PC-9 (cell line): ENCODE measurements at regions of chr2 and their contacts with region 1.

Region 1: GRCh38 chr2:199488772-199489400 is 31.1 kb upstream of the SATB2 start:
- DNase-seq: peak; percentile 34 to 36
- H3K4me3 ChIP-seq: no peak overlapping the region
- H3K27ac ChIP-seq: no peak overlapping the region
- H3K4me1 ChIP-seq: no peaks in the 10 kb centered on the region
- H3K27me3 ChIP-seq: no peaks in the 10 kb centered on the region
- CTCF ChIP-seq: peak; percentile 80

Region 2: DNA sequence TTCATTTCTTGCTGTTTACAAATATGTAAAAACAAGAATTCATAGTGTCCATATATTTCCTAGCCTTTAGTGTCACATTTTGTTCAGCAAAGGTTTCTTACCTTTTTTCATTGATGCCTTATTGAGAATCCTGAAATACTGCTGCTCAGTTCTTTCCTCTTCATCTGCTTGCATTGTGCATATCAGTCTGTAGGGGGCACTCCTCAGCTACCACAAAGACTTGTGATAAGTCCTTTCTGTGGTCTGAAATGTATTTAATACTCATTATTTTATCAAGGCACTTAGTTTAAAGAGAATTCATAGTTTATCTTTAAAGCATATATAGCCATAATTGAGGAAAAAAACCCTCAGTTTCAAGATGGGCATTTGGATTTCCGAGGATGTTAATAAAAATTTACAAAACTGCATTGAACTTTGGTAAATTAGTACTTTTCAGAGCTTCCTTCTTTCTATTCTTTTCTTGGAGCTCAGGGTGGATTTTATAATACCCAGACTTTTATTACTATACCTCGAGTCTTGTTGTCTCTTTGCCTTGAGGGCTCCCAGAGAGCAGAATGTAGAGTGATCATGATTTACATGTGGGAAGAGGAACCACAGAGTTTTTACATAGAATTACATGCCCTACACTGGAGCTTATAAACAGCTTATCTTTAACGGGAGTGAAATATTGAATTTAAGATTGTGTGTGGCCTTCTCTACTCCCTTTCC is 1114.4 kb before region 1 on chr2:
- CTCF ChIA-PET with region 1: no interaction called
- POLR2A ChIA-PET with region 1: no interaction called
- intact Hi-C with region 1: loop called (anchors 5 kb)
- DNase-seq: peak in 1 of 2 experiments; percentile 5
- H3K4me3 ChIP-seq: no peak overlapping the region
- H3K27ac ChIP-seq: no peak overlapping the region
- H3K4me1 ChIP-seq: no peaks in the 10 kb centered on the region
- H3K27me3 ChIP-seq: no peaks in the 10 kb centered on the region
- CTCF ChIP-seq: peak; percentile 78

Region 3: GRCh38 chr2:198657512-198658121 is 831.3 kb before region 1 on chr2:
- CTCF ChIA-PET with region 1: interaction called, 4 read pairs
- POLR2A ChIA-PET with region 1: no interaction called
- intact Hi-C with region 1: loop called (anchors 5 kb)
- DNase-seq: no peak
- H3K4me3 ChIP-seq: no peak overlapping the region
- H3K27ac ChIP-seq: no peak overlapping the region
- H3K4me1 ChIP-seq: no peaks in the 10 kb centered on the region
- H3K27me3 ChIP-seq: no peaks in the 10 kb centered on the region
- CTCF ChIP-seq: peak; percentile 66

Region 4: DNA sequence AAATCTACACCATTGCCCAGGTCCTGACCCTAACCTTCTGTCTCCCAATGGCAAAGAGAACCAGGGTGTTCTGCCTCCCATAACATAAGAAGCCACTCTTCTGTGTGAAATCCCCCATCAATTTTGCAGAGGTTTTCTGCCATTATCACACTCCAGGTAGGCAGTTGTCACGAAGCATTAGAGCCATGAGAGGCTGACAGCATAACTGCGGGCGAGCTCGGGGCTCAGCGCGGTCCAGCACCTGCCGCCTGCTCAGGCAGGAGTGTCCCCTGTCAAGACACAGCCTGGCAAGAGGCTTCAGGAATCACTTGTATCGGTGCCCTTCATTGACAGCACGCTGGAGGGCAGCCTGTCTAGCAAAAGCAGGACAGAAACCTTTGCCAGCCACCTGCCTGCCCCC is 282.4 kb before region 1 on chr2:
- CTCF ChIA-PET with region 1: no interaction called
- POLR2A ChIA-PET with region 1: no interaction called
- intact Hi-C with region 1: no loop called
- DNase-seq: no peak
- H3K4me3 ChIP-seq: no peak overlapping the region
- H3K27ac ChIP-seq: no peak overlapping the region
- H3K4me1 ChIP-seq: no peaks in the 10 kb centered on the region
- H3K27me3 ChIP-seq: no peaks in the 10 kb centered on the region
- CTCF ChIP-seq: no peak

Region 5: DNA sequence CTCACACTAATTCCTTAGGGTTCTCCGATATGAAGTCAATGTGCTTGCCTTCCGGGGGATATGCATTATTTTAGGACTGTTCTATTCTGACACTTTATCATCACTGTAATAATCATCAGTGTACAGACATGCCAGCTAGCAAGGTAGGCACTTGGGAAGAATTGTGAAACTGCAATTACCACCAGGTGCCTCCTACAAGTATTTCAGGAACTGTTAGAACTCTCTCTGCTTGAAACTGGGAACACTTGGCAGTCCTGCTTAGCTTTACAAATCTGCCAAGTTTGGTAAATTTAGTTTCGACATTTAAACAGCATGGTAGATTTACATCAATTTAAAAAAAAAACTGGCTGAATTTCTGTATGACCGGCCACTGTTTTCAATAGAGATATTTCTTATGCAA is 159.9 kb before region 1 on chr2:
- CTCF ChIA-PET with region 1: no interaction called
- POLR2A ChIA-PET with region 1: no interaction called
- intact Hi-C with region 1: no loop called
- DNase-seq: no peak
- H3K4me3 ChIP-seq: no peak overlapping the region
- H3K27ac ChIP-seq: no peak overlapping the region
- H3K4me1 ChIP-seq: no peaks in the 10 kb centered on the region
- H3K27me3 ChIP-seq: no peaks in the 10 kb centered on the region
- CTCF ChIP-seq: no peak

Region 6: GRCh38 chr2:199589308-199589707 is 100.4 kb after region 1 on chr2:
- CTCF ChIA-PET with region 1: no interaction called
- POLR2A ChIA-PET with region 1: no interaction called
- intact Hi-C with region 1: no loop called
- DNase-seq: no peak
- H3K4me3 ChIP-seq: no peak overlapping the region
- H3K27ac ChIP-seq: no peak overlapping the region
- H3K4me1 ChIP-seq: no peaks in the 10 kb centered on the region
- H3K27me3 ChIP-seq: peaks cover 7% of the 10 kb centered on the region; the same call in 1 of the 2 replicates
- CTCF ChIP-seq: no peak

Region 7: GRCh38 chr2:199739413-199740110 is 250.7 kb after region 1 on chr2:
- CTCF ChIA-PET with region 1: no interaction called
- POLR2A ChIA-PET with region 1: no interaction called
- intact Hi-C with region 1: no loop called
- DNase-seq: peak in 1 of 2 experiments; percentile 58
- H3K4me3 ChIP-seq: no peak overlapping the region
- H3K27ac ChIP-seq: no peak overlapping the region
- H3K4me1 ChIP-seq: peaks cover 14% of the 10 kb centered on the region
- H3K27me3 ChIP-seq: no peaks in the 10 kb centered on the region
- CTCF ChIP-seq: peak; percentile 94